ENCODE measurements at regions of chr2 and their contacts with region 1.

Region 1: GRCh38 chr2:37083873-37084794 is at the starts of genes GPATCH11 and HEATR5B:
- DNase-seq: peak; percentile 73 to 97 (median 92)
- ATAC-seq: peak; percentile 84
- H3K4me3 ChIP-seq: peak within 1 kb of the TSS; percentile 76 to 99
- H3K4me3 Mint-ChIP-seq: no peak within 1 kb of the TSS
- H3K27ac ChIP-seq: peak within 1 kb of the TSS; percentile 67 to 85
- H3K27ac Mint-ChIP-seq: peak within 1 kb of the TSS; percentile 14
- H3K4me1 ChIP-seq: peaks cover 51% of the 10 kb centered on the region
- H3K4me1 Mint-ChIP-seq: peaks cover 50% of the 10 kb centered on the region
- H3K27me3 ChIP-seq: no peaks in the 10 kb centered on the region
- H3K27me3 Mint-ChIP-seq: no peaks in the 10 kb centered on the region
- CTCF ChIP-seq: no peak
- total RNA-seq, gene GPATCH11: 5.4 to 6.4 TPM
- total RNA-seq, gene HEATR5B: 9.9 to 11.0 TPM

Region 2: GRCh38 chr2:36960005-36960675 is 124.0 kb before region 1 on chr2:
- CTCF ChIA-PET with region 1: no interaction called
- POLR2A ChIA-PET with region 1: no interaction called
- intact Hi-C with region 1: loop called in 1 of 2 experiments (anchors 2 kb)
- DNase-seq: no peak
- ATAC-seq: no peak
- H3K4me3 ChIP-seq: no peak overlapping the region
- H3K4me3 Mint-ChIP-seq: no peak overlapping the region
- H3K27ac ChIP-seq: no peak overlapping the region
- H3K27ac Mint-ChIP-seq: no peak overlapping the region
- H3K4me1 ChIP-seq: peaks cover 7% of the 10 kb centered on the region
- H3K4me1 Mint-ChIP-seq: peaks cover 70% of the 10 kb centered on the region
- H3K27me3 ChIP-seq: no peaks in the 10 kb centered on the region
- H3K27me3 Mint-ChIP-seq: no peaks in the 10 kb centered on the region
- CTCF ChIP-seq: no peak

Region 3: DNA sequence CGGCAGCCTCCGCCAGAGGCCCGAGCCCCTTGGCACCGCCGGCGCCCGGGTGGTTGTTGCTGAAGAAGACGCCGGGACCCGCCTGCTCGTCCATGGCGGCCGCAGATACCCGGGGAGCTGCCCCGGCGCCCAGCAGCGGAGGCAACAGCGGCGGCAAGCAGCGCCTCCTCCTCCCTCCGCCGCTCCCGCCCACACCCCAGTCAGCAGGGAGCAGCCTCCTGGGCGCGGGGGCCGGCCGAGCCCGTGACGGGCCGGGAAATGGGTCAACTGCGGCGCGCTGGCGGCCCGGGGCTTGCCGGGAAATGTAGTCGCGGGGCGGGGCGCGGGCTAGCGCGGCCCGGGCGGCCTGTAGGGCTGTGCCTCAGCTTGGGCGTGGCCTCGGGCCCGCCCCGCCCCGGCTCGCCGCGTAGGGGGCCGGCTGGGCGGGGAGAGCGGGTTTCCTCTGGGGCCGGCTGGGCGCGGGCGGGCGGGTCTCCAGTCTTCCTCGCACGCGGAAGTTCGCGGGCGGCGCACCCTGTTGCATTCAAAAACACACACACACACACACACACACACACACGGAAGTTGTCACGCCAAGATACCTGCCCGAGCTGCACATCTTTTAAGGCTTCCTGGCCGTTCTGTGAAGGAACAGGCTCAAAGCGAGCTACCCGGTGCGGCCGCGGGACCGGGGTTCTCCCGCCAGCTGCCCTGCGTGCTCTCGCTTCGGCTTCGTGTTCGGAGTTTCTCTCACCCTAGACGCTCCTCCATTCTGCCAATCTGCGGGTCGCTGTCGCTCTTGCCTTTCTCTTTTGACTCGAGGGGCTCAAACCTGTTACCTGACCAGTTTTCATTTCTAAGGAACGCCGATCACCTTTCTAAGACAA is 117.5 kb before region 1 on chr2 and contains the start of gene STRN:
- CTCF ChIA-PET with region 1: no interaction called
- POLR2A ChIA-PET with region 1: interaction called, 11 read pairs
- intact Hi-C with region 1: loop called (anchors 1 kb)
- DNase-seq: peak; percentile 94 to 99 (median 98)
- ATAC-seq: peak; percentile 91
- H3K4me3 ChIP-seq: peak within 1 kb of the TSS; percentile 69 to 96
- H3K4me3 Mint-ChIP-seq: peak within 1 kb of the TSS; percentile 98
- H3K27ac ChIP-seq: peak within 1 kb of the TSS; percentile 76 to 97
- H3K27ac Mint-ChIP-seq: peak within 1 kb of the TSS; percentile 99
- H3K4me1 ChIP-seq: peaks cover 19% of the 10 kb centered on the region
- H3K4me1 Mint-ChIP-seq: peaks cover 50% of the 10 kb centered on the region
- H3K27me3 ChIP-seq: no peaks in the 10 kb centered on the region
- H3K27me3 Mint-ChIP-seq: no peaks in the 10 kb centered on the region
- CTCF ChIP-seq: no peak
- total RNA-seq, gene STRN: 15.6 to 17.4 TPM